Lower leg skin (tissue), 4 donors: ENCODE measurements at regions of chr5 and their contacts with region 1.

Region 1: DNA sequence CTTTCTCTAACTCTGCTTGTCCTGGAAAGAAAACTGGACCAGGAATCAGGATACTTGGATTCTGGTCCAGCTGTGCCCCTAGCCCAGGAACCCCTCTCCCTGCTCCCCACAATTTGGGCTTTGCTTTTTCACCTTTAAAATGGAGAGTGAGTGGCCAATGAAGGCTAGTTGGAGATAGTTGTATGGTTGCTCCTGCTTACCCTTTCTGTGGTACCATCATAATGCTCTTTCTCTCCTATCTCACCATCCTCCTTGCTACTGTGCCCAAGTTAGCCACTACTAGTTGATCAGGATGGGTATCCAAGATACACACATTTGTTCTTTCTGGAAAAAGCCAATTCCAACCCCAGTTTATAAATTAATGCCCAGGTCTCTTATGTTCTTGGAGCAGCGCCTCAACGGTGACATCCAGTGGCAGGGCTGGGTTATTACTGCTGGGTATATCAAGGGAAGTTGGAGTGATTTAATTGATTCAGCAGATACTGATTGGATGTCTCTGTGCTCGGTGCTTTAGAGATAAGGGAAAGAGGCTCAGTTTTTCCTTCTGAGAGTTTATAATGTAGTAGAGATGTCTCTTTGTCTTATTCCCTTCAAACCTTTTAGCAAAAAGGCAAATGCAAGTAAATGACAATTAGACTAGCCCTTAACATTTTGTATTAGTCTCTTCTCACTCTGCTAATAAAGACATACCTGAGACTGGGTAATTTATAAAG is 38.6 kb downstream of the FAXDC2 start:
- DNase-seq: no peak
- H3K4me3 ChIP-seq: no peak overlapping the region
- CTCF ChIP-seq: peak in 1 of 3 donors; percentile 54
- POLR2A ChIP-seq: no peak

Region 2: DNA sequence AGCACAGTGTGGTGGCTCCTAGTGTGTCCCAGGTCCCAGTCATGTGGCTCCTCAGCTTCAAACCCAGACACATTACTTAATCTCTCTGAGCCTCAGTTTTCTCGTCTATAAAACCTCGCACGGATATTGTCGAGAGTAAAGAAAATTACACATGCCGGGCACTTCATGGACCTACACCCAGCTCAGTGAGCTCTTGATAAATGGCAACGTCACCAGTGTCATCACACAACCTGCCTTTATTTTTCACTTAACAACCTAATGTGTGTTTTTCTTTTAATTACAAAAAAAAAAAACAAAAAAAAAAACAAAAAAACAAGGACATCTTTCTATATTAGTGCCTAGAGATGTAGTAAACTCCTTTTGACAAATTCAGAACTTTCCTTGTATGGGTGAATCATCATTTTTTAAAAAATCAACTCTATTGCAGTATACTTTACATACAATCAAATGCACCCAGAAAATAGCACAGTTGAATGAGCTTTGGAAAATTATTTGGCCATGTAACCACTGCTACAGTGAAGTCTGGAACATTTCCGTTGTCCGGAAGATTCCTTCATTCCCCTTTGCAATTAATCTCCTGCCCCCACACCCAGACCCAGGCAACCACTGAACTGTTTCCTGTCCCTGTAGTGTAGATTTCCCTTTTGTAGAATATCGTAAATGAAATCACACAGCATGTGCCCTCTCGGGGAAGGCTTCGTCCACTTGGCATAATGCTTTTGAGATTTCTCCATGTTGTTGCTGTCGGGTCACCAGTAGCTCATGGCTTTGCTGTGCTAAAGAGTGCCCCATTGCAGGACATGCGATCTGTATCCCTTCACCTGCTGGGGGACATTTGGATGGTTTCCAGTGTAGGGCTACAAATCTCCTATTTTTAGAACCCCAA is 157.1 kb before region 1 on chr5:
- intact Hi-C with region 1: loop called (anchors 5 kb)
- DNase-seq: no peak
- H3K4me3 ChIP-seq: no peak overlapping the region
- CTCF ChIP-seq: no peak
- POLR2A ChIP-seq: no peak

Region 3: GRCh38 chr5:154761046-154761736 is 50.6 kb before region 1 on chr5:
- intact Hi-C with region 1: no loop called
- DNase-seq: no peak
- H3K4me3 ChIP-seq: no peak overlapping the region
- CTCF ChIP-seq: no peak
- POLR2A ChIP-seq: no peak